ENCODE measurements at regions of chr14 and their contacts with region 1.

Region 1: GRCh38 chr14:100037353-100037752 is 27.9 kb upstream of the EVL start:
- DNase-seq: no peak
- ATAC-seq: no peak
- H3K4me3 ChIP-seq: no peak overlapping the region
- H3K4me3 Mint-ChIP-seq: no peak overlapping the region
- H3K27ac ChIP-seq: no peak overlapping the region
- H3K27ac Mint-ChIP-seq: no peak overlapping the region
- H3K4me1 ChIP-seq: no peaks in the 10 kb centered on the region
- H3K4me1 Mint-ChIP-seq: peaks cover 4% of the 10 kb centered on the region
- H3K27me3 ChIP-seq: no peaks in the 10 kb centered on the region
- H3K27me3 Mint-ChIP-seq: no peaks in the 10 kb centered on the region
- CTCF ChIP-seq: no peak

Region 2: GRCh38 chr14:99093532-99094517 is 943.5 kb before region 1 on chr14:
- CTCF ChIA-PET with region 1: no interaction called
- POLR2A ChIA-PET with region 1: no interaction called
- intact Hi-C with region 1: no loop called
- DNase-seq: no peak
- ATAC-seq: no peak
- H3K4me3 ChIP-seq: no peak overlapping the region
- H3K4me3 Mint-ChIP-seq: no peak overlapping the region
- H3K27ac ChIP-seq: no peak overlapping the region
- H3K27ac Mint-ChIP-seq: no peak overlapping the region
- H3K4me1 ChIP-seq: no peaks in the 10 kb centered on the region
- H3K4me1 Mint-ChIP-seq: no peaks in the 10 kb centered on the region
- H3K27me3 ChIP-seq: no peaks in the 10 kb centered on the region
- H3K27me3 Mint-ChIP-seq: no peaks in the 10 kb centered on the region
- CTCF ChIP-seq: no peak

Region 3: DNA sequence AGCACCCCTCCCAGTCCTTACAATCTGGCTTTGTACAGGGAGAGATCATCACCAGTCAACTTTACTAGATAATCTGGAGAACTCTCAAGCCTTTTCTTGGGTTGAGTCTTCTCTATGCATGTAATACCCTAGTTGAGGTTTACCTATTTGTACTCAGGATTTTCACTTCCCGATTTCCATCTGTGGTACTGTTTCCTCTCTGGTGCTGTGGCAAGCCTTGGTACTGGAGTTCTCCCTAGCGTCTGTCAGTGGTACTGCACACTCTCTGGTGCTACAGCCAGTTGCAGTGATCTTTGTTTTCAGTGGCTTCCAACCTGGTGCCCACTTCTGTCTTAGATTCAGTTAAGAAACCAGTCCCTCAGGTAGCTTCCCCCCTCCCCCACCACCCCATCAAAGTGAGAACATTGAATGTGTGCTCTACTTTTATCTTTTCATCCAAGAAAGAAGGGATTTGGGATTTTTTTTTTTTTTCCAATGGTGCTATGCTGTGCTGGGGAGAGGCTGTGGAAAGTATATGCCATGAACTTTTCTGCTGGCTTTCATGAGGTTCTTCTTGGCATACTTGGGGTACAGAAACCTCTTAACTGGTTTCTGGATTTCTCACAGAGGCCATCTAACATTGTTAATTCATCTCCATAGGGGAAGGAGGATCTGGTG is 41.5 kb before region 1 on chr14:
- CTCF ChIA-PET with region 1: no interaction called
- POLR2A ChIA-PET with region 1: no interaction called
- intact Hi-C with region 1: loop called in 1 of 2 experiments (anchors 5 kb)
- DNase-seq: peak; percentile 39 to 83 (median 54)
- ATAC-seq: peak; percentile 98
- H3K4me3 ChIP-seq: no peak overlapping the region
- H3K4me3 Mint-ChIP-seq: no peak overlapping the region
- H3K27ac ChIP-seq: no peak overlapping the region
- H3K27ac Mint-ChIP-seq: no peak overlapping the region
- H3K4me1 ChIP-seq: no peaks in the 10 kb centered on the region
- H3K4me1 Mint-ChIP-seq: no peaks in the 10 kb centered on the region
- H3K27me3 ChIP-seq: no peaks in the 10 kb centered on the region
- H3K27me3 Mint-ChIP-seq: no peaks in the 10 kb centered on the region
- CTCF ChIP-seq: peak; percentile 89

Region 4: DNA sequence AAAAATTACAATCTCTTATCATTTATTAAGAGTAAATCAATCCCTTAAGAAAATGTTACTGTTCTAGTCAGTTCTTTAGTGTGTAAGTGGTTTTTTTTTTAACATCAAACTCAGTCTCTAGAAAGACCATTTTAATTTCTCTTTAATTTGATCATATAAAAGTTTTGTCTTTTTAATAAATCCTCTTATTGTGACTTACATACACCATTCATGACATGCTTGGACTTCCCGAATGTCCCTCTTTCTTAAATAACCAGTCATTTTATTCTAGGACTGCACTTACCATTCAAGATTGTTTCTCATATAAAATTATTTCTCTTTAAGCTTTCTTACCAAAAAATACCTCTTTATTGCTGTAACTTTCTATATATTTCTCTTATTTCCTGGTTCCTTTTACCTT is 33.0 kb before region 1 on chr14:
- CTCF ChIA-PET with region 1: no interaction called
- POLR2A ChIA-PET with region 1: no interaction called
- intact Hi-C with region 1: loop called (anchors 1 to 5 kb)
- DNase-seq: no peak
- ATAC-seq: no peak
- H3K4me3 ChIP-seq: no peak overlapping the region
- H3K4me3 Mint-ChIP-seq: no peak overlapping the region
- H3K27ac ChIP-seq: no peak overlapping the region
- H3K27ac Mint-ChIP-seq: no peak overlapping the region
- H3K4me1 ChIP-seq: no peaks in the 10 kb centered on the region
- H3K4me1 Mint-ChIP-seq: no peaks in the 10 kb centered on the region
- H3K27me3 ChIP-seq: no peaks in the 10 kb centered on the region
- H3K27me3 Mint-ChIP-seq: no peaks in the 10 kb centered on the region
- CTCF ChIP-seq: no peak

Region 5: GRCh38 chr14:100173353-100173752 is 136.0 kb after region 1 on chr14:
- CTCF ChIA-PET with region 1: no interaction called
- POLR2A ChIA-PET with region 1: no interaction called
- intact Hi-C with region 1: loop called in 1 of 2 experiments (anchors 5 kb)
- DNase-seq: no peak
- ATAC-seq: no peak
- H3K4me3 ChIP-seq: no peak overlapping the region
- H3K4me3 Mint-ChIP-seq: no peak overlapping the region
- H3K27ac ChIP-seq: no peak overlapping the region
- H3K27ac Mint-ChIP-seq: no peak overlapping the region
- H3K4me1 ChIP-seq: no peaks in the 10 kb centered on the region
- H3K4me1 Mint-ChIP-seq: no peaks in the 10 kb centered on the region
- H3K27me3 ChIP-seq: peaks cover 0 to 2% of the 10 kb centered on the region in 2 experiments
- H3K27me3 Mint-ChIP-seq: peaks cover 6% of the 10 kb centered on the region
- CTCF ChIP-seq: no peak

Region 6: DNA sequence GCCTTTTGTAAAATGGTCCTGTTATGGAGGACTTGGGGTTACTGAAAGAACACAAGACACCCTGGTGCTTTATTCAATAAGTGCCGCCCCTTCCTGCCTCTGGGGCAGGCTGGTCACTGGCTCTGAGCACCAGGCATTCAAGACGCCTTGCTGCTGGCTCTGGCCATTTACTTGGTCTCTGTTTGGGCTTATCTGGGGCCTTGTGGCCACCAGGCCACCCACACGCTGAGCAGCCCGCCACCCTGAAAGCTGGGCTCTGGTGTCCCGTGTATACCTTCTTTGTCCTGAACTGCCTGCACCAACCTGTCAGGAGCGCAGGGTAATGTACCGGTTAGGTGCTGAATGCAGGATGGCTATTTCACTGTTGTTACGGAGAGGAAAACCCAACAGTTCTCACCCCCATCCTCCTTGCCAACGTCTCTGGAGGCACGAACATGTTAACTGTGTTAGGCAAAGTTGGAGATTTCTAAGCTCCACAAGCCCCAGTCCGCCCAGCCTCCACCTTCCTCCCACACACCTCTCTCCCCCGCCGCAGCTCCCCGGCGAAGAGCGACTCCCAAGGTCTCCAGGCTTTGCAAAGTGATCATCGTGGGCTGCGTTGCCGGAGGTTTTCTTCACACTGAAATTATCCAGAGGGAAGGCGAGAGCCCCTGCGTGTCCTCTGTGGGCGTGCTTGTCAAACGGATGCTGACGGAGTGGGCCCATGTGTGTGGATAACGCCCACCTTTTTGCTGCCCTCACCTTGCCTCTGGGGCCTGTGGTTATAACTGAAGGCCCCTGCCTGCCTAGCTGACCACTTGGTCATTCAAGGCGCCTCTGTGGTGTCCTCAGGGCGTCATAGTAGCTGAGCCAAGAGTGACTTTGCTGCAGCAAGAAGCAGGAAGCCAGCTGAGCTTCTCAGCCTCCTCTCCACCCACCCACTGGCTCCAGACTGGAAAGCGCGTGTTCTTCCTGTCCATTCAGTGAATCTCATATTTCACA is 568.6 kb after region 1 on chr14:
- CTCF ChIA-PET with region 1: no interaction called
- POLR2A ChIA-PET with region 1: no interaction called
- intact Hi-C with region 1: no loop called
- DNase-seq: peak in 1 of 14 experiments; percentile 0
- ATAC-seq: no peak
- H3K4me3 ChIP-seq: no peak overlapping the region
- H3K4me3 Mint-ChIP-seq: no peak overlapping the region
- H3K27ac ChIP-seq: no peak overlapping the region
- H3K27ac Mint-ChIP-seq: no peak overlapping the region
- H3K4me1 ChIP-seq: no peaks in the 10 kb centered on the region
- H3K4me1 Mint-ChIP-seq: no peaks in the 10 kb centered on the region
- H3K27me3 ChIP-seq: no peaks in the 10 kb centered on the region
- H3K27me3 Mint-ChIP-seq: peaks cover 16% of the 10 kb centered on the region
- CTCF ChIP-seq: no peak